Heart left ventricle (tissue), 16 donors: ENCODE measurements at regions of chrX and their contacts with region 1.

Region 1: GRCh38 chrX:39736216-39737211 is 361.2 kb downstream of the BCOR start:
- DNase-seq: peak; percentile 84 to 95 (median 91)
- ATAC-seq: peak; percentile 83 to 97 (median 92)
- H3K4me3 ChIP-seq: no peak overlapping the region
- H3K27ac ChIP-seq: peak overlapping the region in 10 of 12 donors; percentile 7 to 70 (median 62)
- H3K4me1 ChIP-seq: peaks cover 0 to 21% (median 9%) of the 10 kb centered on the region in 12 donors
- H3K27me3 ChIP-seq: peaks cover 0 to 9% (median 0%) of the 10 kb centered on the region in 9 donors
- CTCF ChIP-seq: no peak
- POLR2A ChIP-seq: no peak

Region 2: GRCh38 chrX:40153335-40154249 is 417.1 kb after region 1 on chrX:
- intact Hi-C with region 1: loop called in 5 of 10 experiments (anchors 5 to 10 kb)
- DNase-seq: peak in 4 of 5 donors; percentile 37 to 70 (median 62)
- ATAC-seq: peak in 3 of 4 donors; percentile 3 to 22 (median 21)
- H3K4me3 ChIP-seq: peak overlapping the region; percentile 21 to 63 (median 50)
- H3K27ac ChIP-seq: peak overlapping the region; percentile 65 to 89 (median 81)
- H3K4me1 ChIP-seq: peaks cover 0 to 78% (median 29%) of the 10 kb centered on the region in 12 donors
- H3K27me3 ChIP-seq: peaks cover 0 to 96% (median 0%) of the 10 kb centered on the region in 9 donors
- CTCF ChIP-seq: peak in 6 of 12 donors; percentile 9 to 37 (median 27)
- POLR2A ChIP-seq: no peak